ENCODE measurements at regions of chr19 and their contacts with region 1.

Region 1: GRCh38 chr19:54137086-54137921 is at the start of gene CNOT3:
- DNase-seq: peak; percentile 100
- ATAC-seq: peak; percentile 79 to 92
- H3K4me3 ChIP-seq: peak within 1 kb of the TSS; percentile 84
- H3K27ac ChIP-seq: peak within 1 kb of the TSS; percentile 94 to 95
- H3K4me1 ChIP-seq: peaks cover 15% of the 10 kb centered on the region; the same call in 2 of the 3 replicates
- CTCF ChIP-seq: no peak
- EP300 ChIP-seq: no peak
- POLR2A ChIP-seq: peak; percentile 83
- RAD21 ChIP-seq: no peak
- polyA plus RNA-seq, gene CNOT3: 24.9 and 28.3 TPM in 2 replicates

Region 2: DNA sequence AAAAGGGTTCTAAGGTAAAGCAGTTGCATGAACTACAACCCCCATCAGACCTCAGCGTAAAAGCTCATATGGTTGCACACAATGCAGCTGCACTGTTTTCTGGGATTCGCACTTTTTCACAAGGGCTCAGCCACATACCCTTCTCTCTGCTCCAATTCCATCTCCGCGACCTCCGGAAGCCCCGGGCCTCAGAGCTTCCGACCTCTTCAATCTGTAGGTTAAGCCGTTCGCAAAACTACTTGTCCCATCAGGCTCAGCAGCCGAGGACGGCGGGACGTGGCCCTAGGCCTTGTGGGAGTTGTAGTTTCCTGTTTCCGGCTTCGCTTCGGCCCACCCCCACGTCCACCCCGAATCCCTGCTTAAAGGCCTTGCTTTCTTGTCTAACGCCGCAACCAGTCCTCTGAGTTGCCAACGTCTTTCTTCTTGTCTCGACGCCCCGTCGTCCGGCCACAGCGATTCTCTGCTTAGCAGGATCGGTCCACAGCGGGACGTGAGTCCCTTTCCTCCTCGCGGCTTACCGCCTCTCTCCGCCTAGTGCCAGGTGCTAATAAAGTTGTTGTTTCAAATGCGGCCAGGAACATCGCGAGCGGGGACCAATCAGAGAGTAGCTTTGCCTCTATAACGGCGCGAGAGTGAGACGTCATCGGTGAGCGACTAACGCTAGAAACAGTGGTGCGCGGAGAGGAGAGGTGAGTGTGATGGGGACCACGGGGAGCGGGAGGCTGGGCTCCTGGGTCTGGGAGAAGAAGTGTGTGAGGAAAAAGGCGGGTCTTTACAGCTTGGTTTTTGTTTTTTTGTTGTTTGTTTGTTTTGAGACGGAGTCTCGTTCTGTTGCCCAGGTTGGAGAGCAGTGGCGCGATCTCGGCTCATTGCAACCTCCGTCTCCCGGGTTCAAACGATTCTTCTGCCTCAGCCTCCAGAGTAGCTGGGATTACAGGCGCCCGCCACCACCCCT is 21.9 kb before region 1 on chr19 and contains the starts of genes PRPF31 and TFPT:
- CTCF ChIA-PET with region 1: interaction called, 3 read pairs
- POLR2A ChIA-PET with region 1: interaction called, 51 read pairs
- DNase-seq: peak; percentile 99
- ATAC-seq: peak; percentile 96 to 98
- H3K4me3 ChIP-seq: peak within 1 kb of the TSS; percentile 95
- H3K27ac ChIP-seq: peak within 1 kb of the TSS; percentile 84 to 93
- H3K4me1 ChIP-seq: peaks cover 14% of the 10 kb centered on the region; the same call in 2 of the 3 replicates
- CTCF ChIP-seq: no peak
- EP300 ChIP-seq: no peak
- POLR2A ChIP-seq: peak; percentile 78
- RAD21 ChIP-seq: no peak
- polyA plus RNA-seq, gene PRPF31: 66.9 and 69.8 TPM in 2 replicates
- polyA plus RNA-seq, gene TFPT: 10.8 and 16.1 TPM in 2 replicates

Region 3: DNA sequence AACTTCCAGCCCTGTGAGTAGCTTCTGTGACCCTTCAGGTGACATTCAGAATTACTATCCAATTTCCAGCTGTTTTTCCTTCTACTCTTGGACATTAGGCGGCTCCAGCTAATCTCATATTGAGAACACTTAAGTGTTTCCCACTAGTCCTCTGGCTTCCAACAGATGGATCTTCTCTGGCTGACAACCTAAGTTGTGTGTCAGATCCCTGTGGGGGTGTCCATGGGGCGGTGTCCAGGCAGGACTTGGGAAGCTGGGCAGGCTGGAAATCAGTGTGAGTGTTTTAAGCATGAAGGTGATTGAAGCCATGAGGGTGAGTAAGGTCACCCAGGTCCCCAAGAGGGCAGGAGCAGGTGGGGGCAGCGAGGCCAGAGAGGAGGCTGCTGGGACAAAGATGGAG is 10.4 kb after region 1 on chr19:
- CTCF ChIA-PET with region 1: interaction called, 14 read pairs
- POLR2A ChIA-PET with region 1: interaction called, 36 read pairs
- DNase-seq: no peak
- ATAC-seq: peak; percentile 13 to 23; a peak in 3 of 6 replicates
- H3K4me3 ChIP-seq: no peak overlapping the region
- H3K27ac ChIP-seq: no peak overlapping the region
- H3K4me1 ChIP-seq: no peaks in the 10 kb centered on the region
- CTCF ChIP-seq: no peak
- EP300 ChIP-seq: no peak
- POLR2A ChIP-seq: no peak
- RAD21 ChIP-seq: no peak

Region 4: DNA sequence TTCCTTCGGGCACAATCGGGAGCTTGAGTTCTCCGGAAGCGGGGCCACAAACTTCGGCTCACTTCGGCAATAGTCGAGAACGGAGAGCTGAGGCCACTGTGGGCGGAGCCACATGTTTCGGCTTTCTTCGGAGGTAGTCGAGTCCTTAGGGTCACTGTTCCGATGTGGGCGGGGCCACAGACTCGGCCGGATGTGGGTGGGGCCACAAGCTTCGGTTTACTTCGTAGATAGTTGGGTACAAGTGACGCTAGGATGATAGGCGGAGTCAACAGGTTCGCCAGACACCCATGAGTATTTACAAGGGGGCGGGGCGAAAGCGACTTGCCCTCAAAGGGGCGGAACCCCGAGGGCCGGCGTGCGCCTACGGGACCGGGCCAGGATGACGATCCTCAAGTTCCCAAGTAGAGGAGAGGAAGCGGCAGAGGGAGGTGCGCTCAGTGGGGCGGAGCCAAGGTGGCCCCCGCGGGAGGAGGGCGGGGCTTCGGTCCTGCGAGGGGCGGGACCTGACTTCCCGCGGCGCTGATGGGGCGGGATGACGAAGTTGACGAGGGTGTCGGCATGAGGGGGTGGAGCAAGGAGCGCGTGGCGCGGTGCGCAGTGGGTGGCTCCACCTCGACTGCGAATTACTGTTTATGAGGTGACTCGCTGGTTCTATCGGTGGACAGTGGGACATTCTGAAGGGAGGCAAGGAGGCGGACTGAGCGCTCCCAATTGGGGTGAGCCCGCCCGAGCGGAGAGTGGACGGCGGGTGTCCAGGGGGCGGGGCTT is 52.6 kb after region 1 on chr19:
- CTCF ChIA-PET with region 1: no interaction called
- POLR2A ChIA-PET with region 1: interaction called, 33 read pairs
- DNase-seq: peak; percentile 96 to 100
- ATAC-seq: peak; percentile 63 to 78
- H3K4me3 ChIP-seq: peak overlapping the region; percentile 80
- H3K27ac ChIP-seq: peak overlapping the region; percentile 94 to 95
- H3K4me1 ChIP-seq: peaks cover 23% of the 10 kb centered on the region
- CTCF ChIP-seq: no peak
- EP300 ChIP-seq: no peak
- POLR2A ChIP-seq: peak; percentile 51
- RAD21 ChIP-seq: no peak